Naive thymus-derived CD4-positive, alpha-beta T cell (primary cell): ENCODE measurements at regions of chr10 and their contacts with region 1.

Region 1: DNA sequence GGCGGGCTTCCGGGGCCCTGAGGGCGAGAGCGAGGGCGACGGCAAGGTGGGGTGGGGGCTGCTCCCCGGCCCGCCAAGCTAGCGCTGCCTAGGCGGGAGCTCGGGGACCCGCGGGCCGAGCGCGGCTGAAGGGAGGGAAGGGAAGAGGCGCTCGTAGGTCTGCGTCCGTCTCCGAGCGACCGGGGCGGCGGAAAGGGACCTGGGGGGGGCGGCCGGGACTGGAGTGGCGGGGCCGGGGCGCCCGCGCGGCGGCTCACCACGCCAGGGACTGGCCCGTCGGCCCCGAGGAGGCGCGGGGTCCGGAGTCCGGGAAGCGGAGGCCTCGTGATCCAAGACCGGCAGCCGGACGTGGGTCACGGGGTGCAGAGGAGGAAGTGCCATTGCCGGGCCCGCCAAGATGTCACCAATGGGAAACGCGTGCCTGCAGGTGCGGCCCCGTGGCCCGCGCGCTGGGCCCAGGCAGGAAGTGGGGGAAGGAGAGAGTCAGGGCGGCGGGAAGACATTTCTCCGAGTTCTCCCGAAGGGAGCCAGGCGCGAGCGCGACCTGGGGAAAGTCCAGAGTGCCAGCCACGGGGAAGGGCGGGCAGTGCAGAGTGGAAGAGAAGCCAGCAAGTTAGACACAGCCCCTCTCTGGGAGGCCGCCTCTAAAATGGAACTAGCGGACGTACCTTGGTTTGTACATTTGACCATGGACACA is 11.9 kb downstream of the HNRNPF start:
- DNase-seq: peak; percentile 61 to 85 (median 68)
- ATAC-seq: peak; percentile 78
- H3K4me3 ChIP-seq: peak overlapping the region; percentile 70
- H3K4me3 Mint-ChIP-seq: peak overlapping the region; percentile 90 to 100 (median 94)
- H3K27ac ChIP-seq: peak overlapping the region; percentile 89
- H3K27ac Mint-ChIP-seq: peak overlapping the region; percentile 87 to 99 (median 97)
- H3K4me1 ChIP-seq: peaks cover 55 to 66% of the 10 kb centered on the region in 2 donors
- H3K4me1 Mint-ChIP-seq: peaks cover 67 to 93% (median 81%) of the 10 kb centered on the region in 7 donors
- H3K27me3 ChIP-seq: no peaks in the 10 kb centered on the region
- H3K27me3 Mint-ChIP-seq: no peaks in the 10 kb centered on the region

Region 2: DNA sequence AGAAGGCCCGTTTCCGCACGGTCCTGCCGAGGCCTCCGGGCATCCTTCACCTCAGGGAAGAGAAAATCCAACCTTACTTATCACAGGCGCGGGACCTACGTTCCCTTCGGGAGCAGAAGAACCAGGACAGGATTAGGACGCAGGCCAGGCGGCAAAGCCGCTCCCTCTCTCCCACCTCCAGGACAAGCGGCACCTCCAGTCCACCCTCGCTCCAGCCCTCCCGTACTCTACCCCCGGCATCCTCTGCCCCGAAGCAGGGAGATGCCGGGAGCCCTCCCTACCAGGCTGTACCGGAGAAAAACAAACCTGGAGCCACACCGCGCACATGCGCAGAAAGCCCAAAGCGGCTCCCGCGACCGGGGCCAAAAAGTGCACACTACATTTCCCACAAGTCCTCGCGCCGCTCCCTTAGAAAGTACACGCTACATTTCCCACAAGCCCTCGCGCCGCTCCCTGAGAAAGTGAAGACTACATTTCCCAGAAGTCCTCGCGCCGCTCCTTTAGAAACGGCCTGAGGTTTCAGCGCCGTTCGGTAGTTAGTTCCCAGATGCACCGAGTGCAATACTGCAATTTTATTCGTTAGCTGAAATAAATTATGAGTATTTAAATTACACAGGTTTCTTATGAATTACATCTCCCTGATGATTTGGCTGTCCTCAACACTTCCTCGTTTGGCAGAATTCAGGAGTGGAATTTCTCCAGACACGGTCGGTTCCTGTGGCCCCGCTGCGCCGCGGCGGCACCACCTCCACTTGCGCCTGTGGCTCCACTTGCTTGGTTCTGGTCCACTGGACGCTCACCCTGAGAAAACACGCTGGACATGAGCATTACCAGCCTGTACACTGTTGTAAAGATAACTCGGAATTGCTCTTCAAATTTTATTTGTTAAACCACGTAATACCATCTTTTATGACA is 844.3 kb before region 1 on chr10:
- CTCF ChIA-PET with region 1: no interaction called
- POLR2A ChIA-PET with region 1: no interaction called
- intact Hi-C with region 1: loop called in 1 of 2 experiments (anchors 1 kb)
- DNase-seq: peak; percentile 83 to 92 (median 91)
- ATAC-seq: peak; percentile 98
- H3K4me3 ChIP-seq: peak overlapping the region; percentile 95
- H3K4me3 Mint-ChIP-seq: peak overlapping the region; percentile 96 to 100 (median 98)
- H3K27ac ChIP-seq: peak overlapping the region; percentile 87
- H3K27ac Mint-ChIP-seq: peak overlapping the region; percentile 86 to 98 (median 96)
- H3K4me1 ChIP-seq: peaks cover 0 to 16% of the 10 kb centered on the region in 2 donors
- H3K4me1 Mint-ChIP-seq: peaks cover 24 to 49% (median 45%) of the 10 kb centered on the region in 7 donors
- H3K27me3 ChIP-seq: no peaks in the 10 kb centered on the region
- H3K27me3 Mint-ChIP-seq: no peaks in the 10 kb centered on the region

Region 3: DNA sequence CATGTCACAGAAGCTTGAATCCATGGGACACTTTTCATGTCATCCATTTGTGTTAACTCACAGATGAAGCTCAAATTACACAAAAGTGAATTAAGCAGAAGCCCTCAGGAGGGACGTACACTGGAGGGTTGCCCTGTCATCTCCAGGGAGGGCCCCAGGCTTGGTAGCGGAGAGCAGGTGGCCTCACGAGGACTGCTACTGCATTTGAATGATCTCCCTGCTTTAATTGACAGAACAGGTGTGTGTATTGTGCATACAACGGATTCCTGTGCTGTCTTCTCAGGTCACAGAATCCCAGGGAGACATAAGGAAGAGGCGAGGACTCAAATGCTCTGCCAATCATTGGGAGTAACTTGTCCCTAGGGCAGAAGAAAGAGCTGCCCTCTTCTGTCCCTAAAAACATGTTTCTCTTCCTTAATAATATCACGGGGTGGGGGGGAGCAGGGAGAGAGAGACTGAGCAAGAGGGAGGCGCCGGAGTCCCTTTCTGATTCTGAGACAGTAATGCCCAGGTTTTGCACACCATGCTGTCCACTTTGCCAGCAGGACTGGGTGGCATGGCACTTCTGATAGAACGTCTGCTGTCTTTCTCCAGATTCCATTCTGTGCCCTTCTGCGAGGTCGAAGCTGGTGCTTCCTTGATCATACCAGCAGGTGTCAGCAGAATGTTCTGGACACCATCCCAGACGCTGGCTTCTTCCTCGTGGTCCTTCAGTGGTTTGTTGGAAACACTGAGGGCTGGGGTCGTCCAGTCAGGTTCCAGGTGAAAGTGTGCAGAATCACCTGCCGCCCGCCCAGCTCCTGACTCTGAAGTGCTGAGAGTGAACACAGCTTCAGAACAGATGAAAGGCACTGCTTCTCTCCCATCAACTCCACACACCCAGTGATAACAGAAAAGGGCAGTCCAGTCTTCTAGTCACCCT is 104.1 kb before region 1 on chr10:
- CTCF ChIA-PET with region 1: no interaction called
- POLR2A ChIA-PET with region 1: interaction called, 3 read pairs
- intact Hi-C with region 1: loop called in 1 of 2 experiments (anchors 5 kb)
- DNase-seq: peak in 6 of 9 donors; percentile 22 to 51 (median 44)
- ATAC-seq: peak; percentile 72
- H3K4me3 ChIP-seq: no peak overlapping the region
- H3K4me3 Mint-ChIP-seq: peak overlapping the region; percentile 13 to 75 (median 55)
- H3K27ac ChIP-seq: no peak overlapping the region
- H3K27ac Mint-ChIP-seq: peak overlapping the region in 6 of 9 donors; percentile 65 to 84 (median 78)
- H3K4me1 ChIP-seq: peaks cover 31 to 35% of the 10 kb centered on the region in 2 donors
- H3K4me1 Mint-ChIP-seq: peaks cover 16 to 83% (median 34%) of the 10 kb centered on the region in 7 donors
- H3K27me3 ChIP-seq: no peaks in the 10 kb centered on the region
- H3K27me3 Mint-ChIP-seq: peaks cover 0 to 15% (median 6%) of the 10 kb centered on the region in 5 donors

Region 4: GRCh38 chr10:43407576-43408330 is 10.7 kb after region 1 on chr10:
- CTCF ChIA-PET with region 1: interaction called, 5 read pairs
- POLR2A ChIA-PET with region 1: interaction called, 31 read pairs
- intact Hi-C with region 1: loop called (anchors 1 kb)
- DNase-seq: peak; percentile 67 to 91 (median 79)
- ATAC-seq: peak; percentile 48
- H3K4me3 ChIP-seq: peak overlapping the region; percentile 99
- H3K4me3 Mint-ChIP-seq: peak overlapping the region; percentile 91 to 100 (median 98)
- H3K27ac ChIP-seq: peak overlapping the region; percentile 100
- H3K27ac Mint-ChIP-seq: peak overlapping the region; percentile 97 to 99 (median 98)
- H3K4me1 ChIP-seq: peaks cover 28 to 37% of the 10 kb centered on the region in 2 donors
- H3K4me1 Mint-ChIP-seq: peaks cover 31 to 50% (median 39%) of the 10 kb centered on the region in 7 donors
- H3K27me3 ChIP-seq: no peaks in the 10 kb centered on the region
- H3K27me3 Mint-ChIP-seq: peaks cover 0 to 2% (median 0%) of the 10 kb centered on the region in 5 donors

Region 5: GRCh38 chr10:43436400-43437140 is 39.5 kb after region 1 on chr10 and contains the start of gene ZNF487:
- CTCF ChIA-PET with region 1: no interaction called
- POLR2A ChIA-PET with region 1: interaction called, 11 read pairs
- intact Hi-C with region 1: loop called (anchors 1 kb)
- DNase-seq: peak; percentile 87 to 94 (median 92)
- ATAC-seq: peak; percentile 94
- H3K4me3 ChIP-seq: peak within 1 kb of the TSS; percentile 97
- H3K4me3 Mint-ChIP-seq: peak within 1 kb of the TSS; percentile 93 to 99 (median 97)
- H3K27ac ChIP-seq: peak within 1 kb of the TSS; percentile 96
- H3K27ac Mint-ChIP-seq: peak within 1 kb of the TSS; percentile 93 to 100 (median 99)
- H3K4me1 ChIP-seq: peaks cover 5% of the 10 kb centered on the region in 2 donors
- H3K4me1 Mint-ChIP-seq: peaks cover 13 to 39% (median 27%) of the 10 kb centered on the region in 7 donors
- H3K27me3 ChIP-seq: no peaks in the 10 kb centered on the region
- H3K27me3 Mint-ChIP-seq: no peaks in the 10 kb centered on the region
- total RNA-seq, gene ZNF487: 4.1 to 12.0 (median 5.9) TPM

Region 6: GRCh38 chr10:43671656-43672531 is 274.8 kb after region 1 on chr10:
- CTCF ChIA-PET with region 1: no interaction called
- POLR2A ChIA-PET with region 1: no interaction called
- intact Hi-C with region 1: no loop called
- DNase-seq: peak in 8 of 9 donors; percentile 18 to 71 (median 52)
- ATAC-seq: peak; percentile 75
- H3K4me3 ChIP-seq: no peak overlapping the region
- H3K4me3 Mint-ChIP-seq: no peak overlapping the region
- H3K27ac ChIP-seq: no peak overlapping the region
- H3K27ac Mint-ChIP-seq: no peak overlapping the region
- H3K4me1 ChIP-seq: no peaks in the 10 kb centered on the region
- H3K4me1 Mint-ChIP-seq: peaks cover 2 to 11% (median 6%) of the 10 kb centered on the region in 7 donors
- H3K27me3 ChIP-seq: no peaks in the 10 kb centered on the region
- H3K27me3 Mint-ChIP-seq: peaks cover 33 to 46% (median 38%) of the 10 kb centered on the region in 5 donors